ENCODE measurements at regions of chr19 and their contacts with region 1.

Region 1: DNA sequence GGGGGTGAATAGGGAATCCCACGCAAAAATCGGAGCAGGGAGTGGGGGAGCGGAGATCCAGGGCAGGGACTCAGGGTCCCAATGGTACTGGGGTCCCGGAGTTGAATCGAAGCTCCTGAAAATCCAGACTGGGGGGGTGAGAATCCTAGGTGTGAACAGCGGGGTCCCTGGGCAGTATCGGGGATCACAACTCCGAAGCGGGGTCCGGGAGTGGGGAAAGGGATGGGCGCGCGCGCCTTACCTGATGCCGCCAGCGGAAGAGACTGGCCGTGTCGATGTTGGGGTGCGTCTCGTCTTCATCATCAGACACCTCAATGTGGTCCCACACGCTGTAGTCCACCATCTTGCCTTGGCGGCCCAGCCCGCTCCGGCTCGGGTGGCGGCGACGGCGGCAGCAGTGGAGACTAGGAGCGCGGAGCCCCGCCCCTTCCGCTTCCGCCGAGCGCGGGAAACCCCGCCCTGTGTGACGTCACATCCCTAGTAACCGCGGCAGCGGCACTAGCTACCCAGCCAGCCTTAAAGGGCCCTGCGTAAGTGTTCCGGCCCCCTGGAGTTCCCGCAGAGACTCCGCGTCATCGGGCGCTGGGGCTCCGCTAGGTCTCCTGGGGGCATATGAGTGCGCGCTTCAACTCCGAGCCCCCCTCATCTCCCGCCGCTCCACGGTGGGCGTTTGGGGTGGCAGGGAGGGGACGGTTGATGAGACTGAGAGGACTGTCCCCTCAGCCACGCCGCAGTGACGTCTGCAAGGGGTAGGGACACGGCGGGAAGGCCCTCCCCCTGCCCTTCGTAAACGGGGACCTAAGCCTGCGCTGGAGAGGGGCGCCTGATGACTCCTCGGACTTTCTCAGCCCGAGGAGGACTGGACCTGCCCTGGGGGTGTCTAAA is at the start of gene CDC37:
- DNase-seq: peak; percentile 75
- H3K4me3 ChIP-seq: peak within 1 kb of the TSS; percentile 90
- H3K27me3 ChIP-seq: no peaks in the 10 kb centered on the region; the same call in 1 of the 2 replicates
- CTCF ChIP-seq: no peak
- polyA plus RNA-seq, gene CDC37: 361 and 429 TPM in 2 replicates

Region 2: GRCh38 chr19:10259162-10259905 is 144.0 kb before region 1 on chr19:
- CTCF ChIA-PET with region 1: interaction called, 13 read pairs
- POLR2A ChIA-PET with region 1: no interaction called
- DNase-seq: no peak
- H3K4me3 ChIP-seq: no peak overlapping the region
- H3K27me3 ChIP-seq: no peaks in the 10 kb centered on the region
- CTCF ChIP-seq: peak; percentile 80

Region 3: GRCh38 chr19:10318807-10319682 is 84.3 kb before region 1 on chr19:
- CTCF ChIA-PET with region 1: no interaction called
- POLR2A ChIA-PET with region 1: interaction called, 12 read pairs
- DNase-seq: no peak
- H3K4me3 ChIP-seq: no peak overlapping the region
- H3K27me3 ChIP-seq: no peaks in the 10 kb centered on the region
- CTCF ChIP-seq: no peak

Region 4: GRCh38 chr19:10363789-10364281 is 39.5 kb before region 1 on chr19:
- CTCF ChIA-PET with region 1: no interaction called
- POLR2A ChIA-PET with region 1: no interaction called
- DNase-seq: no peak
- H3K4me3 ChIP-seq: no peak overlapping the region
- H3K27me3 ChIP-seq: no peaks in the 10 kb centered on the region
- CTCF ChIP-seq: no peak

Region 5: DNA sequence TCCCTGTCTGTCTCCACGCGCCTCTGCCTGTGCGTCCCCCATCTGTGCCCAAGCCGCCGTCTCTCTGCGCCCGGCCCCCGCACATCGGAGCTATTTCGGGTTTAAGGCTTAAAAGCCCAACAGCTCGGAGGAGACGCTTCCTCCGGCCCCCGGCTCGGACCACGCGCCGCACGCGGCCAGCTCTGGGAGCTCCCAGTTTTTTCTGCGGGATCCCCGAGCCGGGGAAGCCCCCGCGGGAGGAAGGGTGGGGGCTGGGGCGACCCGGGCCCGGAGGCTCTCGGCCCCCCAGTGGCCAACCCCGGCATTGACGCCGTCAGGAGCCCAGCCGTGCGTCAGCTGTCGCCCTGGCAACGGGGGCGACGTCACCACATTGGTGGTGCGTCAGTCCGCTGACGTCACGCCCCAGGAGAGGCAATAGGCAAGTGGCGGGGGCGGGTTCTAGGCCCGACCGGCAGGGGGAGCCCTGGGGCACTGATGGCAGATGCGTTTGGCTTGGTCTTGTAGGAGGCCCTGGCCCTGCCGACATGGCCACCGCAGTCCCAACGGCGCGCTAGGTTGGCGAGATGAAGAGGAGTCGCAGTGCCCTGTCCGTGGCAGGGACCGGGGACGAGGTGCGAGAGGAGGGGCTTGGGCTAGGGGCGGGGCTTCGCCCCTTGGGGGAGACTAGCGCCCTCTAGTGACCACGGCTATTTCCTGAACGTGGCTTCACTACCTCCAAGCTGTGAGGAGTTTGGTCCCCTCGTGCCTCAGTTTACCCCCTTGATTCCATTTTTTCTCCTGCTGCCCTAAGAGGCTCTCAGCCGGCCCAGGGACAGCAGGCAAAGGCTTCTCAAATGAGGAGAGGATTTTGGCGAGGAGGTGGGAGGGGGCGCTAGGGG is 13.2 kb after region 1 on chr19:
- CTCF ChIA-PET with region 1: interaction called, 321 read pairs
- POLR2A ChIA-PET with region 1: interaction called, 8 read pairs
- DNase-seq: no peak
- H3K4me3 ChIP-seq: peak overlapping the region; percentile 54
- H3K27me3 ChIP-seq: peaks cover 26% of the 10 kb centered on the region
- CTCF ChIP-seq: peak; percentile 82

Region 6: GRCh38 chr19:10653465-10653714 is 250.0 kb after region 1 on chr19:
- CTCF ChIA-PET with region 1: no interaction called
- POLR2A ChIA-PET with region 1: no interaction called
- DNase-seq: no peak
- H3K4me3 ChIP-seq: peak overlapping the region; percentile 53
- H3K27me3 ChIP-seq: no peaks in the 10 kb centered on the region
- CTCF ChIP-seq: no peak

Region 7: DNA sequence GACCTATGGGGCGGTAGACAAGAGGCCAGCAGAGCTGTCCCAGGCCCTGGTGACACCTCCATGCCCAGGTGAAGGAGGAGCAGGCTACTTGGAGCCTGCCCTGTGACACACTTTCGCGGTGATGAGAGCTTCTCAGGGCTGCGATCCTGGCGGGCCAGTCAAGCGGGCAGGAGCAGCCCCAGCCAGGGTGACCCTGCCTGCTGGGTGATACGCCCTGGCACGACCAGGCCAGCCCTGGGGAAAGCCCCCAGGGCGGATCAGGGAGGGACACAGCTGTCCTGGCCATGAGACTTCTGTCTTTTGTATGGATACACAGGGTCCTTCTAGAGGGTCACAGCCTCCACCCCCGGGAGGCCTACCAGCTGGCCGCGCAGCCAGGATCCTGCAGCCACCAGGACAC is 327.5 kb after region 1 on chr19:
- CTCF ChIA-PET with region 1: no interaction called
- POLR2A ChIA-PET with region 1: interaction called, 11 read pairs
- DNase-seq: no peak
- H3K4me3 ChIP-seq: no peak overlapping the region
- H3K27me3 ChIP-seq: no peaks in the 10 kb centered on the region
- CTCF ChIP-seq: no peak